Heart right ventricle (tissue), 16 donors: ENCODE measurements at regions of chr14 and their contacts with region 1.

Region 1: GRCh38 chr14:54220071-54220703 is 176.6 kb upstream of the CDKN3 start:
- DNase-seq: peak; percentile 25 to 49
- ATAC-seq: peak in 7 of 8 donors; percentile 73 to 93 (median 83)
- H3K4me3 ChIP-seq: peak overlapping the region in 9 of 10 donors; percentile 19 to 48 (median 27)
- H3K27ac ChIP-seq: peak overlapping the region in 5 of 10 donors; percentile 5 to 65 (median 39)
- H3K4me1 ChIP-seq: peaks cover 0 to 16% (median 8%) of the 10 kb centered on the region in 9 donors
- H3K27me3 ChIP-seq: peaks cover 0 to 69% (median 54%) of the 10 kb centered on the region in 7 donors
- CTCF ChIP-seq: no peak

Region 2: DNA sequence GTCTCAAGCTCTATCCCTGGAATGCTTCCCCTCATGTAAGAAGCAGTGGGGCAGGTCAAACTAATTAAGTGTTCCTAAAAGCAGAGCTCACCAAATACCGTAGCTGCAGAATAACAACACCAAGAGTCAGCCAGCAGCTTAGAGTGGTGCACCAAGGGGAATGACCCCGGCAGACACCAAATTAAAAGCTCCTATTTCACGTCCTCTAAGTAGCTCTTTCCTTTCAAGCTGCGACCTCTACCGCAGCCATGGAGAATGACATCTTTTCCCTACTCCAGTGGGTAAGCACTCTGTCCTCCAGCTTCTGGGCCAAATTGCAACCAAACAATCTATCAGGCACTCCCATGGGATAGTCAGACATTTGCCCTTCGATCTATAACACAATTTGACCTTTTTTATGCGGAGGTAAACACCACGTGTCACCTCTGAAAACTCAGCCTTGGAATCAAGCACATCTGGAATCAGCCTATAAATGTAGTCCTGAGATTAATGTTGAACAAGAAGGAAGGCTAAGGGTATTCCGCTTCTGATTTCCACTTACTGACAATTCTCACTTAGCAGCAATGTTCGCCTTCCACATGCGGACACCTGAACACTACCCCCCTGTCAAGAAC is 109.0 kb after region 1 on chr14:
- intact Hi-C with region 1: loop called in 1 of 10 experiments (anchors 10 kb)
- DNase-seq: peak in 1 of 2 donors; percentile 47
- ATAC-seq: peak; percentile 64 to 91 (median 82)
- H3K4me3 ChIP-seq: no peak overlapping the region
- H3K27ac ChIP-seq: peak overlapping the region in 2 of 10 donors; percentile 22 to 27
- H3K4me1 ChIP-seq: peaks cover 0 to 13% (median 5%) of the 10 kb centered on the region in 9 donors
- H3K27me3 ChIP-seq: no peaks in the 10 kb centered on the region
- CTCF ChIP-seq: peak in 8 of 9 donors; percentile 45 to 81 (median 75)